ENCODE measurements at regions of chr2 and their contacts with region 1.

Region 1: DNA sequence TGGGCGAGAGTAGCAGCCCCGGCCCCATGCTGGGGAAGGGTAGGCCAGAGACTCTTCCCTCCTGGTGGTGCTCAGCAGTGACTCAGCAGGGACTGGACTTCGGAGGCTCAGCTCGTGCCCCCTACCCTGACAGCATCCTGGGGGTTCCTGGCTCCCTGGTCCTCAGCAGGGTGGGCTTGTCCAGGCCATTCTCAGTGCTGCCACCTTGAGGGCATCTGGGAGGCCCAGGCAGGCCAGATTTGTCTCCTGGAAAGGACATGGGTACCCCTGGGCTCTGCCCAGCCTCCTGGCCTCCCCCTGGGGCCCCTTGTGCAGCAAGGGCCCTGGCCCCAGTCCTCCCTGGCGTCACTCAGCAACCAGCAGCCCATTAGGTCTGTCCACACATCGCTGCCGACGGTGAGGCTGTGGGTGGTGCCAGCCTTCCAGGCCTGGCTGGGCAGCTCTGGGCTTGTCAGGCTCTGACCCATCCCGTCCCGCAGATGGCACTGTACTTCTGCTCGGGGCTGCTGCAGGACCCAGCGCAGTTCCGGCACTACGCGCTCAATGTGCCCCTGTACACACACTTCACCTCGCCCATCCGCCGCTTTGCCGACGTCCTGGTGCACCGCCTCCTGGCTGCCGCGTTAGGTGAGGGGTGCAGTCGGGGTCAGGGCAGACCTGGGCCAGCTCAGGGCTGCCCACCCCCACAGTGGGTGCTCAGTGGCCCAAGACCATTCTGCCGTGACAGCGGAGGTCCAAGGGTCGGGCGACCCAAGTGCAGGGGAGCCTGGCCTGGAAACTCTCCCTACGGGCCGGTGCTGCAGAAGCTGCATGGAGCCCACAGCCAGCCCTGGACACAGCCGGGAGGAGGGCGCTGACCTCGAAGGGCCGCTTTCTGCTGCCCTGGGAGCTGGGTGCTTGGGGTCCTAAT is 44.9 kb upstream of the ALPP start:
- DNase-seq: no peak
- ATAC-seq: no peak
- H3K4me3 Mint-ChIP-seq: no peak overlapping the region
- H3K27ac Mint-ChIP-seq: no peak overlapping the region
- H3K4me1 Mint-ChIP-seq: no peaks in the 10 kb centered on the region
- H3K27me3 Mint-ChIP-seq: no peaks in the 10 kb centered on the region

Region 2: GRCh38 chr2:232088771-232089170 is 244.8 kb before region 1 on chr2:
- CTCF ChIA-PET with region 1: no interaction called
- DNase-seq: no peak
- ATAC-seq: no peak
- H3K4me3 Mint-ChIP-seq: no peak overlapping the region
- H3K27ac Mint-ChIP-seq: no peak overlapping the region
- H3K4me1 Mint-ChIP-seq: peaks cover 2% of the 10 kb centered on the region
- H3K27me3 Mint-ChIP-seq: no peaks in the 10 kb centered on the region

Region 3: DNA sequence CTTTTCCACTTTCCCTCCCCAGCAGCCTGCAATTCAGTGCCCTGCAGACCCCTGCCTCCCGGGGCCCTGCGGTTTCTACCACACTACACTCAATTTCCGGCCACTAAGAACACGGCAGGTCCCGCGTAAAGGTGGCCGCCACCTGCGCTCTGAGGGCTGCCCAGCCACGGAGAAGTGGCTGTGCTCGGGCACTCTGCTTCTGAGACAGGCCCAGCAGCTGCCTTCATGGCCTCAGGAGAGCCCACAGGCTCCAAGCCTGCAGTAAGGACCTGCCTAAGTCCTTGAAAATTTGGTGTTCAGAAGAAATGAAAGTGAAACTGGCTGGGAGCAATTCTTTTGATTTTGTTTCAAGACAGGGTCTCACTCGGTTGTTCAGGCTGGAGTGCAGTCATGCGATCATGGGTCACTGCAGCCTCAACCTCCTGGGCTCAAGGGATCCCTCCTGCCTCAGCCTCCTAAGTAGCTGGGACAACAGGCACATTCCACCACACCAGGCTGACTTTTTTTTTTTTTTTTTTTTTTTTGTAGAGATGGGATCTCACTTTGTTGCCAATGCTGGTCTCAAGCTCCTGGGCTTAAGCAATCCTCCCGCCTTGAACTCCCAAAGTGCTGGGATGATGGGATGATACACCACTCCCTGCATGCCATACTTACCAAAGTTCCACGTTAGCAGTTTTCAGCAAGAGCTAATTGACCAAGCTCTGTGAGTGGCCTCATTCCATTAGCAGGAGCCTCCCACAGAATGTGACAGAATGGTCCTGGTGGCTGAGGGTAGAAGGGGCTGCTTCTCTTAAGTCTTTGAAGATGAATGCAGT is 30.4 kb after region 1 on chr2:
- CTCF ChIA-PET with region 1: interaction called, 12 read pairs
- DNase-seq: peak; percentile 68
- ATAC-seq: peak; percentile 73
- H3K4me3 Mint-ChIP-seq: peak overlapping the region; percentile 75
- H3K27ac Mint-ChIP-seq: peak overlapping the region; percentile 92
- H3K4me1 Mint-ChIP-seq: peaks cover 18% of the 10 kb centered on the region
- H3K27me3 Mint-ChIP-seq: no peaks in the 10 kb centered on the region

Region 4: DNA sequence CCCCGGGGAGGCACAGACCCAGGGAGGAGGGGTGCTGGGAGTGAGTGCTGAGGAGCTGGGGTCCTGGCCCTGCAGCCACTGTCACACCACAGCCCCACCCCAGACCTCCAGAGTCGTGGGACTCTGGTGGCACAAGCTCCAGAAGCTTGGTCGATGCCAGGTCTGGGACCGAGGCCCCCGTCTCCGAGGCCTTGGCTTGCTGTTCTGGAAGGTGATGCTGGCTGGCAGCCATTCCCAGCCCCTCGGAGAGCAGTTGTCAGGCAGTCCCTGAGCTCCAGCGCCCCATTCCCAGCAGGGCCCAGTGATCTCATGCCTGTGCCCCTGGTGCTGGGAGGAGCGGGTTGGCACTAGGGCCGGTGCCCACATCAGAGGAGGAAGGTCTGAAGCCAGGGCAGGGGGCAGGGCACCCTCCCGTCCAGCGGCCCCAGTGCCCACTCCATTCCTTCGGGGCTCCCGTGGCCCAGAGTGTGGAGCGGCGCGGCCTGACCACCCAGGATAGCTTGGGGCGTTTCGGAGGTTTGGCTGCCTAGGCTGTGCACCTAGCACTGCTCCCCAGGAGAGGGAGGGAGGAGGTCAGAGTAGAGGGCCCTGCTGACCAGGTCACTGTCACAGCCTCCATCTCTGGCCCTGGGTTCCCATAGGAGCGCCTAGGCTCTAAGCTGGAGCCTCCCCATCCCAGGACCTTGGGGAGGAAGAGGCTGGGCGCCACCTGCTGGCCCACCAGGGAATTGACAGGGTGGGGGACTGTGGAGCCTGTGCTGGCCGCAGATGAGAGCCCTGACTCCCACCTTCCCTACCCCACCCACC is 105.5 kb after region 1 on chr2:
- CTCF ChIA-PET with region 1: interaction called, 16 read pairs
- DNase-seq: no peak
- ATAC-seq: no peak
- H3K4me3 Mint-ChIP-seq: no peak overlapping the region
- H3K27ac Mint-ChIP-seq: no peak overlapping the region
- H3K4me1 Mint-ChIP-seq: peaks cover 10% of the 10 kb centered on the region
- H3K27me3 Mint-ChIP-seq: no peaks in the 10 kb centered on the region

Region 5: GRCh38 chr2:232539298-232540231 is 205.9 kb after region 1 on chr2 and contains the start of gene CHRNG:
- CTCF ChIA-PET with region 1: no interaction called
- DNase-seq: no peak
- ATAC-seq: no peak
- H3K4me3 Mint-ChIP-seq: no peak within 1 kb of the TSS
- H3K27ac Mint-ChIP-seq: no peak within 1 kb of the TSS
- H3K4me1 Mint-ChIP-seq: peaks cover 7% of the 10 kb centered on the region
- H3K27me3 Mint-ChIP-seq: peaks cover 6% of the 10 kb centered on the region
- total RNA-seq, gene CHRNG: not detected